Dorsolateral prefrontal cortex (tissue), 120 donors: ENCODE measurements at regions of chr19 and their contacts with region 1.

Region 1: GRCh38 chr19:9796113-9796773 is 22.6 kb downstream of the FBXL12 start:
- DNase-seq: peak; percentile 65 to 94 (median 78)
- H3K4me3 ChIP-seq: peak overlapping the region in 1 of 59 donors; percentile 15
- H3K27ac ChIP-seq: peak overlapping the region in 5 of 59 donors; percentile 16 to 47 (median 33)
- H3K27me3 ChIP-seq: no peaks in the 10 kb centered on the region
- CTCF ChIP-seq: peak; percentile 59 to 94 (median 84)

Region 2: GRCh38 chr19:9309139-9309973 is 486.9 kb before region 1 on chr19 and contains the start of gene ZNF699:
- intact Hi-C with region 1: loop called (anchors 5 kb)
- DNase-seq: peak; percentile 93 to 98 (median 96)
- H3K4me3 ChIP-seq: peak within 1 kb of the TSS; percentile 61 to 100 (median 94)
- H3K27ac ChIP-seq: peak within 1 kb of the TSS; percentile 51 to 98 (median 92)
- H3K27me3 ChIP-seq: no peaks in the 10 kb centered on the region
- CTCF ChIP-seq: peak in 23 of 56 donors; percentile 4 to 49 (median 24)
- total RNA-seq, gene ZNF699: 4.8 to 14.5 (median 8.3) TPM

Region 3: DNA sequence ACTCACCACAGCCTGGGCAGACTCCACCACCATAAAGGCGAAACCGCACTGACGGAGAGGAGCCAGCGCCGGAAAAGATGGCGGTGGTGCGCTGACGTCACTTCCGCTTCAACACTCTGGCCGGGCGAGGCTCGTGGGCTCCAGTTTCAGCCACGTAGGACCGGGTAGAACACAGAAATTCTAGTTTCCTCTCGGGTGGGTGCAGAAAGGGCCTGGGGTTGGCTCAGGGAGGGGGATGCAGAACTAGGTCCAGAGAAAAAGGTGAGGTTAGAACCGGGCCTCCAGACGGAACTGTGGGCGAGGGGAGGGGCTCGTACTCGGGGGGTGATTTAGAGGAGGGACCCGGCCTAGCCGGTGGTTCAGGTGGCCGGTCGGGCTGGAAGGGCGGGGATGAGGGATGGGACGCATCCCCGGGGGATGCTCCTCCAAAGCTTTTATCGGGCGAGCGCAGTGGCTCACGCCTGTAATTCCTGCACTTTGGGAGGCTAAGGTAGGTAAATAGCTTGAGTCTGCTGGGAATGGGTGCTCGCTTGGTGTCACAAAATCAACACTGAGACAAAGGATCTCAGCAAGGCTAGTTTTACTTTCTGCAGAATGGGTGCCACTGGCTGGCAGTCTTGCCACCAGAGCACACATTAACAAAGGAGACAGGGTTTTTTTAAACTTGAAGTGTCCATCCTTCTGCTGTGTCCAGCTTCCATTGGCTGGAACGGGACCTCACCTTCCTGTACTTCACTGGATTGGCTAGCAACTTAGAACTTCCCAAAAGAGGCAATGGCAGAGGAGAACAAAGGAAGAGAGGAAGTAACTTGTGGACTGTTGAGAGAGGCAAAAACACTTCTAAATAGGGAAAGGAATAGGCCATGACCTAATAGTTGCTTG is 174.8 kb before region 1 on chr19 and contains the start of gene ZNF561:
- intact Hi-C with region 1: loop called (anchors 2 kb)
- DNase-seq: peak; percentile 79 to 90 (median 86)
- H3K4me3 ChIP-seq: peak within 1 kb of the TSS; percentile 55 to 99 (median 93)
- H3K27ac ChIP-seq: peak within 1 kb of the TSS; percentile 51 to 99 (median 95)
- H3K27me3 ChIP-seq: no peaks in the 10 kb centered on the region
- CTCF ChIP-seq: peak in 19 of 56 donors; percentile 5 to 47 (median 21)
- total RNA-seq, gene ZNF561: 15.0 to 38.5 (median 25.3) TPM

Region 4: GRCh38 chr19:9641810-9642209 is 154.4 kb before region 1 on chr19:
- intact Hi-C with region 1: no loop called
- DNase-seq: no peak
- H3K4me3 ChIP-seq: no peak overlapping the region
- H3K27ac ChIP-seq: no peak overlapping the region
- H3K27me3 ChIP-seq: no peaks in the 10 kb centered on the region
- CTCF ChIP-seq: no peak

Region 5: DNA sequence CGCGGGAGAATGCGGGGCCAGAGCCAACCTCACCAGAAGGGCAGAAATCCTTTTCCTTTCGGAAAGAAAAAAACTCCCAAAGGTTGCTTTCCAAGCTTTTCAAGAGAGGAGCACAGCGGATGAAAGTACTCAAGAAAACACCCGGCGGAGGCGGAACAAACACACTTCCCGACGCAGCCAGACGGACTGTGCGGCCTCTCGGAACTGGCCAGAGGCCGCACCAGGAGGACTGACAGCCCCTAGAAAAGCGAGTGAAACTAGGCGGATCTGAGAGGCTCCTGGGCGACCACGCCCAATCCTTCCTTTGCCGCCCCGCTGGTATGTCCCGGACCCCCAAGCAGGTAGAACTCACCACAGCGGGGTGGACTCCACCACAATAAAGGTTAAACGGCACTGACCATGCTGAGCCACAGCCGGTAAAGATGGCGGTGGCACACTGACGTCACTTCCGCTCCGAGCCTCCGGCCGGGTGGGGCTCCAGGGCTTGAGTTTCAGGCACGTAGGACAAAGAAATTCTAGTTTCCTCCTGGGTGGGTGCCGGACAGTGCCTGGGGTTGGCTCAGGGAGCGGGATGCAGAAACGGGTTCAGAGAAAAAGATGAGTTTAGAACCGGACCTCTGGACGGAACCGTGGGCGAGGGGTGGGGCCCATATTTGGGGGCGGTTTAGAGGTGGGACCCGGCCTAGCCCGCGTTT is 121.4 kb before region 1 on chr19 and contains the start of gene ZNF562:
- intact Hi-C with region 1: loop called in 1 of 2 experiments (anchors 10 kb)
- DNase-seq: peak; percentile 84 to 92 (median 88)
- H3K4me3 ChIP-seq: peak within 1 kb of the TSS; percentile 54 to 98 (median 86)
- H3K27ac ChIP-seq: peak within 1 kb of the TSS; percentile 67 to 99 (median 96)
- H3K27me3 ChIP-seq: no peaks in the 10 kb centered on the region
- CTCF ChIP-seq: peak in 20 of 56 donors; percentile 11 to 41 (median 20)
- total RNA-seq, gene ZNF562: 31.2 to 59.9 (median 44.7) TPM

Region 6: GRCh38 chr19:9811174-9811573 is 14.9 kb after region 1 on chr19:
- intact Hi-C with region 1: loop called in 1 of 2 experiments (anchors 2 kb)
- DNase-seq: no peak
- H3K4me3 ChIP-seq: no peak overlapping the region
- H3K27ac ChIP-seq: no peak overlapping the region
- H3K27me3 ChIP-seq: no peaks in the 10 kb centered on the region
- CTCF ChIP-seq: no peak